Transverse colon (tissue), 4 donors: ENCODE measurements at regions of chr3 and their contacts with region 1.

Region 1: GRCh38 chr3:46488735-46489361 is 8.9 kb upstream of the RTP3 start:
- DNase-seq: peak; percentile 97
- H3K4me3 ChIP-seq: no peak overlapping the region
- H3K27ac ChIP-seq: peak overlapping the region in 1 of 4 donors; percentile 35
- H3K4me1 ChIP-seq: peaks cover 0 to 15% (median 4%) of the 10 kb centered on the region in 4 donors
- H3K27me3 ChIP-seq: no peaks in the 10 kb centered on the region
- CTCF ChIP-seq: peak; percentile 91 to 100 (median 99)
- EP300 ChIP-seq: no peak
- POLR2A ChIP-seq: no peak

Region 2: GRCh38 chr3:46558184-46559043 is 69.6 kb after region 1 on chr3:
- in situ Hi-C with region 1: loop called in 1 of 4 experiments (anchors 5 kb)
- intact Hi-C with region 1: no loop called
- DNase-seq: peak; percentile 83
- H3K4me3 ChIP-seq: peak overlapping the region in 3 of 4 donors; percentile 37 to 46 (median 40)
- H3K27ac ChIP-seq: peak overlapping the region; percentile 28 to 80 (median 70)
- H3K4me1 ChIP-seq: peaks cover 0 to 12% (median 4%) of the 10 kb centered on the region in 4 donors
- H3K27me3 ChIP-seq: no peaks in the 10 kb centered on the region
- CTCF ChIP-seq: peak; percentile 33 to 74 (median 54)
- EP300 ChIP-seq: no peak
- POLR2A ChIP-seq: no peak

Region 3: GRCh38 chr3:46629551-46630517 is 141.0 kb after region 1 on chr3:
- in situ Hi-C with region 1: loop called in 3 of 4 experiments (anchors 5 to 10 kb)
- intact Hi-C with region 1: loop called (anchors 2 kb)
- DNase-seq: peak; percentile 84
- H3K4me3 ChIP-seq: peak overlapping the region in 2 of 4 donors; percentile 12 to 28
- H3K27ac ChIP-seq: peak overlapping the region; percentile 61 to 78 (median 72)
- H3K4me1 ChIP-seq: peaks cover 7 to 50% (median 19%) of the 10 kb centered on the region in 4 donors
- H3K27me3 ChIP-seq: no peaks in the 10 kb centered on the region
- CTCF ChIP-seq: peak; percentile 96 to 99 (median 97)
- EP300 ChIP-seq: no peak
- POLR2A ChIP-seq: no peak

Region 4: DNA sequence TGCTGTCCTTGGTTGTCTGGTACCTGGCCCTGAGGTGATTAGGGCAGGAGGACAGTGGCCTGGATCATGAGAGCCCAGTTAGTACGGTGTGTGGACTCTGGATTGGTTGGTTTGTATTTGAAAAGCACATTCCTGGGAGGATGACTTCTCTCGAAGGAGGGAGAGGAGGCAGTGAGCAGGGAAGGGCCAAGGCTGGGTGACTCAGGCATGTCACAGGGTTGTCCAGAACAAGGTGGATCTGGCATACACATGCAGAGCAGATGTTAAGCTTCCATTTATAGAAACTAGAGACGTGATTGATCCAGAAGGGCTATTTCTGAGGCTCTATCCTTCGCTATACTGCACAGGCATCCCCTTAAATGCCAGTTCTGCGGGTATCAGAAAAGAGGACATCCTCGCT is 157.9 kb after region 1 on chr3:
- in situ Hi-C with region 1: loop called in 1 of 4 experiments (anchors 10 kb)
- intact Hi-C with region 1: no loop called
- DNase-seq: no peak
- H3K4me3 ChIP-seq: no peak overlapping the region
- H3K27ac ChIP-seq: no peak overlapping the region
- H3K4me1 ChIP-seq: no peaks in the 10 kb centered on the region
- H3K27me3 ChIP-seq: peaks cover 15% of the 10 kb centered on the region
- CTCF ChIP-seq: no peak
- EP300 ChIP-seq: no peak
- POLR2A ChIP-seq: no peak